ENCODE measurements at regions of chr5 and their contacts with region 1.

Region 1: DNA sequence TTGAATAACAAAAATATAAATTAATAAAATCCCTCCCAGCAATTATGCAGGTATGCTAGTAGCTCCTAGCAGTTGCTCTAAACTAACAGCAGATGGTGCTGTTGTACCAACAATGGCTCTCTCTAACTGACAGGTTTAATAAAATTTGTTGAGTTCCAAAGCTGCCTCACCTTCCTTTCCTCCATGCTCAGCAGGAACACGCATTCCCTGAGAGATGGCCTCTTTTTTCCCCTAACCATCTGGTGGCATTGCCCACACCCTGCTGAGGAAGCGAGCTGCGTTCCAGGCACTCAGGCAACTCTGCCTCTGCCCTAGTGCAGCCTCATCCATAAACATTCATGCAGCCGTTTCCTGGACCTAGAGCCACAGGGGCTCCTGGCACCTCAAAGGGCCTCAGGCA is 106.2 kb downstream of the KLHL3 start:
- DNase-seq: peak in 1 of 2 donors; percentile 65
- H3K4me3 ChIP-seq: peak overlapping the region in 1 of 2 donors; percentile 2
- H3K27ac ChIP-seq: peak overlapping the region; percentile 88 to 93
- H3K4me1 ChIP-seq: peaks cover 4 to 17% of the 10 kb centered on the region in 2 donors
- H3K27me3 ChIP-seq: no peaks in the 10 kb centered on the region
- CTCF ChIP-seq: peak; percentile 88 to 94 (median 93)

Region 2: DNA sequence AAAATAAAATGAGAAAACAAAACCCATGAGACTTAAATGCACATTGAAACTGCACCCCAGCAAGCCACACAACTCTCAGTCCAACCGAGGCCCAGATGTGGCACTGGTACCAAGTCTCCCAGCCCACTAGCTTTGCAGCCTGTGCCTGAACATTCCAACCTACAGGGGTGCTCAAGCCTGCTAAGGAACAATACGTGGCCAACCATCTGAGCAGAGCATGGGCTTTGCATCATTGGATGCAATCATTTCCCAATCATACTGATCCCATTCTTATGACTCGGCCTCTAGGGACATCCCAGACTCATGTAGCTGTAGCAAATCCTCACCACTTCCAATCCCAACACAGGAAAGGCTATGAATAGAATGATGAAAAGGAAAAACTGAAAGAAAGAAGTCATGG is 427.8 kb before region 1 on chr5:
- intact Hi-C with region 1: loop called (anchors 10 kb)
- DNase-seq: peak in 1 of 2 donors; percentile 85
- H3K4me3 ChIP-seq: no peak overlapping the region
- H3K27ac ChIP-seq: no peak overlapping the region
- H3K4me1 ChIP-seq: no peaks in the 10 kb centered on the region
- H3K27me3 ChIP-seq: no peaks in the 10 kb centered on the region
- CTCF ChIP-seq: peak; percentile 30 to 44 (median 35)

Region 3: DNA sequence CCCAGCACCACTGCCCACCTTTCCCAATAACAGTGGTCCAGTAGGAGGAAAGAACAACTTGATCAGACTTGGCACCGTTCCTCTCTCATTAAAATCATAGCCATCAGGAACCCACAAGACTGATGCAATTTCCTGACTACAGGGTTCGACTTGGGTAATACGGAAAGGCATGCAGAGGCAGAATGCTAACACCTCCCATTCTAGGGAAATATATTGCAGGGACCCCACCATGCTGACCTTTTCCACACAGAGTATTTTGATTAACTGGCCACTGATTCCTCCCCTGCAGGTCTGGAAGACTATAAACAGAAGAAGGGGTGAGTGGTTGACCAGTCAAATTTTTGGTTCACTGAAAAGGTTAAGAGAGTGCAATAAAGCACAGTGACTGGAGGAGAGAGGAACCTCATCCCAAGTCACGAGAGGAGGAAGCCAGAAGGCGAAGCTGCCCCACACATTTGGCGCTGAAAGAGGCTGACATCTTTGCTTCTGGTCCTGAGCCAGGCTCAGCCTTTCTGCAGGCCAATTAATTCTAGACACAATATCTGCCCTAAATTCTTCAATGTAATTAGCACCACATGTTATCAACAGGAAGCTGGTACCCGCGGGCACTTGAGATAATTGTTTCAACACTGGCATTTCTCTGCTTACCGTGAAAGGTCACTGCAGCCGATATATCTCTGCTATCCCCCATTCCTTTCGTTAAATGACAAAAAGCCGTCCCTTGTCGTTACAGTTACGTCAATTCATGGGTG is 65.8 kb before region 1 on chr5:
- intact Hi-C with region 1: no loop called
- DNase-seq: no peak
- H3K4me3 ChIP-seq: no peak overlapping the region
- H3K27ac ChIP-seq: no peak overlapping the region
- H3K4me1 ChIP-seq: peaks cover 0 to 3% of the 10 kb centered on the region in 2 donors
- H3K27me3 ChIP-seq: no peaks in the 10 kb centered on the region
- CTCF ChIP-seq: no peak

Region 4: DNA sequence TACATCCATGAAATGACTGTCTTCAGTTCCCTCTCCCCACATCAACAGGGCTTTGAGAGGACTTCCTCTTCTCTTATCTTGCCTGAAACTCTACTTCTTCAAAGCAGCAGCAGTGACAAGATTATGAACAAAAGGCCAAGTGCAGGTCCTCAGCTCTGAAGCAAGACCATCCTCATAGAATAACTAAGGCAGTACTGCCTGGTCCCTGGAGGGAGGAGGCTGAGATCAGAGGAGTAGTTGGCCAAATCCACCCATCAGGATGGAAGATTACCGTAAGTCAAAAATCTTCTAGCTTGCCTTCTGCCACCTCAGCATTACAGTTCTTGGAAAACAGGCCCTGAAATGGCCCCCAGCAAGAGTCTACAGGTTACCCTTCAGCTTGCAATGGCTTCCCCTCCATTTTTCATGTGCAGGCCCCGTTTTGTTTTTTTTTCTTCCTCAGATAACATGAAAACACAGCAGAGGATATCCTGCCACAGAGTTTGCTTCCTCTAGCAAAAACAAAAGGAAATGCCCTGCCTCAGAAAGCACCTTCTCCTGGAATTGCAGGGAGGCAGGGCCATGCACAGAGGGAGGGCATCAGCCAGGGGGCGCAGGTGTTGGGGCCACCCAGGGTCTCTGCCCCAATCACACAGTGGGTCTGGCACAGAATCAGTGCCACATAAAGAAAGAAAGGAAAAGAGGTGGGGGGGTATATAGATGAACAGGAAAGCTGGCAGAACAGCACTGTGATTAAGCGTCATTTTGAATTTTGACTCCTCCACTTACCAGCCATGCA is 66.2 kb after region 1 on chr5:
- intact Hi-C with region 1: no loop called
- DNase-seq: no peak
- H3K4me3 ChIP-seq: no peak overlapping the region
- H3K27ac ChIP-seq: no peak overlapping the region
- H3K4me1 ChIP-seq: peaks cover 0 to 7% of the 10 kb centered on the region in 2 donors
- H3K27me3 ChIP-seq: no peaks in the 10 kb centered on the region
- CTCF ChIP-seq: no peak

Region 5: GRCh38 chr5:137743031-137743640 is 113.5 kb after region 1 on chr5:
- intact Hi-C with region 1: loop called (anchors 1 kb)
- DNase-seq: no peak
- H3K4me3 ChIP-seq: no peak overlapping the region
- H3K27ac ChIP-seq: peak overlapping the region in 1 of 2 donors; percentile 35
- H3K4me1 ChIP-seq: peaks cover 0 to 5% of the 10 kb centered on the region in 2 donors
- H3K27me3 ChIP-seq: no peaks in the 10 kb centered on the region
- CTCF ChIP-seq: peak; percentile 56 to 68 (median 61)

Region 6: GRCh38 chr5:138035605-138036537 is 406.2 kb after region 1 on chr5:
- intact Hi-C with region 1: loop called (anchors 5 kb)
- DNase-seq: peak in 1 of 2 donors; percentile 79
- H3K4me3 ChIP-seq: no peak overlapping the region
- H3K27ac ChIP-seq: peak overlapping the region; percentile 19 to 50
- H3K4me1 ChIP-seq: peaks cover 4 to 17% of the 10 kb centered on the region in 2 donors
- H3K27me3 ChIP-seq: no peaks in the 10 kb centered on the region
- CTCF ChIP-seq: peak; percentile 77 to 89 (median 84)

Region 7: DNA sequence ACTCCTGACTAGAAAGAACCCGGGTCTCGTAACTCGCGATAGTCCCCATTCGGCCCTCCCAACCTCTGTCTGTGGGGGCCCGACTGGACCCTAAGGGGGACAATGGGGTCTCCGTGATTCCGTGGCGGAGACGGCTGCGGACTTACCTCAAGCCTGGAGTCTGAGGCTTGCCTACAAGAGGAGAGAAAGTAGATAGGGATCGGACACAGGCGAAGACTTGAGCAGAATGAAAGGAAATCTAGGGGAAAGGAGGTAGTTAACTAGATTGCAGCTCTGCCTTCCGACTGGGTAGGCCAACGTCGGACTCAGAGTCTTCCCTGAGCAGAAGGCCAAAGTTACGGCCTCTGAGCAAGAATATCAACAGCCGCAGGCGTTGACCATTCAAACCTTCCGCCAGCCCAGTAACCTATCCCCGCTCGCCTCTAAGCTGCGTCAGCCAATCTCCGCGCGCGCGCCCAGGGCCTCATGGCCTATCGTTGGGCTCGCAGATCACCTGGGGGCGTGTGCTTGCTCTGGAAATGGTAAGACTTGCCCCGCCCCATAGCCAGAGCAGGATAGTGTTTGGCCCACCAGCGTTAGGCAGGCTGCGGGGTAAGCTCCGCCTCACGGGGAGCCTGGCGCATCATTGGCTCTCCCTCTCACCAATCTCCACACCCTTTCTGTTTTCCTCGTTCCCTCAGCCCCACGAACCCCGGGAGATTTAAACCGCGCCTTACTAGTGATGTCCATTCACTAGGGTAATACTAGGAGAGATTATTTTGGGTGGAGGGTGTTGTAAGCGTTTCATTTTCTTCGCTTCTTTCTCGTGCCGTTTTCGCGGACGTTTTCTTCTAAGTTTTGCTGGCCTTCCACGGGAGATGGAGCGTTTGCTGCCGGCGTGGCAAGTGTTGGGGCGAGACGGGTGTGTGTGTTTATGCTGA is 702.1 kb after region 1 on chr5 and contains the start of gene CDC25C:
- intact Hi-C with region 1: loop called (anchors 10 kb)
- DNase-seq: peak; percentile 98 to 99
- H3K4me3 ChIP-seq: peak within 1 kb of the TSS; percentile 47 to 65
- H3K27ac ChIP-seq: no peak within 1 kb of the TSS
- H3K4me1 ChIP-seq: peaks cover 0 to 3% of the 10 kb centered on the region in 2 donors
- H3K27me3 ChIP-seq: no peaks in the 10 kb centered on the region
- CTCF ChIP-seq: no peak
- total RNA-seq, gene CDC25C: not detected

Measured in ascending aorta (tissue), 2 donors.